Mammary epithelial cell (primary cell): ENCODE measurements at regions of chr16 and their contacts with region 1.

Region 1: GRCh38 chr16:48164907-48165726 is 9.3 kb upstream of the ABCC12 start:
- DNase-seq: peak; percentile 61
- H3K4me3 ChIP-seq: peak overlapping the region in 1 of 3 experiments; percentile 16
- H3K27ac ChIP-seq: no peak overlapping the region
- H3K4me1 ChIP-seq: no peaks in the 10 kb centered on the region
- H3K27me3 ChIP-seq: no peaks in the 10 kb centered on the region
- CTCF ChIP-seq: peak; percentile 68 to 83

Region 2: DNA sequence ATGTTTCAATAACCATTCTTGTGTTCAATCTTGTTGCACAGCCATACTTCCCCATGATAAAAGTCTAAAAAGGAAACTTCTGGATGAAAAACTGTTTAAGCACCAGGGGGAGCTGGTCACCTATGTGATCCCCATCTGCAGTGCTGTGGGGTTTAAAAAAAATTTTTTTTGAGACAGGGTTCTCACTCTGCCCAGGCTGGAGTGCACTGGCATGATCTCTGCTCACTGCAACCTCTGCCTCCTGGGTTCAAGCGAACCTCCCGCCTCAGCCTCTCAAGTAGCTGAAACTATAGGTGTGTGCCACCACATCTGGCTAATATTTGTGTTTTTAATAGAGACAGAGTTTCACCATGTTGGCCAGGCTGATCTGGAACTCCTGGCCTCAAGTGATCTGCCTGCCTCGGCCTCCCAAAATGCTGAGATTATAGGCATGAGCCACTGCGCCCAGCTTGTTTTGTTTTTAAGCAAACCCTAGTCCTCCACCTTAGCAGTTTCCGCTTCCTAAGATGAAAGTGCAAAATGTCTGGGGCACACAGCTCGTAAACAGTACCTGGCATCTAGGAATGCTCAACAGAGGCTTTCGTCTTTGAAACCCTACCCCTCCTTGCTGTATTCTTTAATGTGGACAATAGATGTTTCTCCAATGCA is 1217.1 kb before region 1 on chr16:
- CTCF ChIA-PET with region 1: no interaction called
- dilution Hi-C with region 1: loop called (anchors 5 kb)
- in situ Hi-C with region 1: loop called (anchors 10 kb)
- intact Hi-C with region 1: loop called (anchors 1 kb)
- DNase-seq: peak; percentile 26
- H3K4me3 ChIP-seq: no peak overlapping the region
- H3K27ac ChIP-seq: no peak overlapping the region
- H3K4me1 ChIP-seq: no peaks in the 10 kb centered on the region
- H3K27me3 ChIP-seq: no peaks in the 10 kb centered on the region
- CTCF ChIP-seq: peak; percentile 48 to 62

Region 3: DNA sequence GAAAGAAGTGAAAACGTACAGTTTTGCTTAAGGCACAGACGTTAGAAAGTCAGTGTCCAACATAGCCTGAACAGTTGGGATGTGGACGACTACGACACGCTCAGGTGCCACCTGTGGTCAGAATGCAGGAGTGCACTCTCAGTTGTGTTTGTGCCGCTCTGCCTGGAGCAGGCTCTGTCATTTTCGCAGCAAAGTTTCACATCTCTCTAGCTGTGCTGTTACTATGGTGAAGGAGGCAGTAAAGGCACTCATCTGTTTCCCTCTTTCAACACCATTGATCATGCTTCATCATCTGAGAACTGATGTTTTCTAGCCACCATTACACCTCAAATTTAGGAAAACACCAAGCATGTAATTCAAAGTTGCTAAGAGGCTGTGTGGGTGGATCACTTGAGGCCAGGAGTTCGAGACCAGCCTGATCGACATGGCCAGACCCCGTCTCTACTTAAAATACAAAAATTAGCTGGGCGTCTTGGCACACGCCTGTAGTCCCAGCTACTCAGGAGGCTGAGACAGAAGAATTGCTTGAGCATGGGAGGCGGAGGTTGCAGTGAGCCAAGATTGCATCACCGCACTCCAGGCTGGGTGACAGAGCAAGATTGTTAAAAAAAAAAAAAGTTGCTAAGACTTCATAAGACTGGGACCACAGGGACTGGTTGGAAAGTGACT is 1146.8 kb before region 1 on chr16:
- CTCF ChIA-PET with region 1: no interaction called
- dilution Hi-C with region 1: loop called (anchors 10 kb)
- in situ Hi-C with region 1: no loop called
- intact Hi-C with region 1: loop called (anchors 5 kb)
- DNase-seq: peak; percentile 56
- H3K4me3 ChIP-seq: no peak overlapping the region
- H3K27ac ChIP-seq: no peak overlapping the region
- H3K4me1 ChIP-seq: no peaks in the 10 kb centered on the region
- H3K27me3 ChIP-seq: no peaks in the 10 kb centered on the region
- CTCF ChIP-seq: peak; percentile 57 to 82

Region 4: GRCh38 chr16:47141773-47142485 is 1023.2 kb before region 1 on chr16:
- CTCF ChIA-PET with region 1: no interaction called
- dilution Hi-C with region 1: no loop called
- in situ Hi-C with region 1: loop called in 1 of 2 experiments (anchors 10 kb)
- intact Hi-C with region 1: loop called (anchors 2 kb)
- DNase-seq: peak; percentile 92
- H3K4me3 ChIP-seq: peak overlapping the region; percentile 68 to 78 (median 71)
- H3K27ac ChIP-seq: peak overlapping the region; percentile 70
- H3K4me1 ChIP-seq: peaks cover 30% of the 10 kb centered on the region
- H3K27me3 ChIP-seq: no peaks in the 10 kb centered on the region
- CTCF ChIP-seq: peak; percentile 98 to 99

Region 5: GRCh38 chr16:48123104-48123788 is 41.9 kb before region 1 on chr16:
- CTCF ChIA-PET with region 1: no interaction called
- dilution Hi-C with region 1: loop called (anchors 5 kb)
- in situ Hi-C with region 1: no loop called
- intact Hi-C with region 1: no loop called
- DNase-seq: peak; percentile 99
- H3K4me3 ChIP-seq: no peak overlapping the region
- H3K27ac ChIP-seq: peak overlapping the region; percentile 23
- H3K4me1 ChIP-seq: peaks cover 33% of the 10 kb centered on the region
- H3K27me3 ChIP-seq: no peaks in the 10 kb centered on the region
- CTCF ChIP-seq: no peak

Region 6: GRCh38 chr16:48526058-48526957 is 361.2 kb after region 1 on chr16:
- CTCF ChIA-PET with region 1: interaction called, 4 read pairs
- dilution Hi-C with region 1: no loop called
- in situ Hi-C with region 1: no loop called
- intact Hi-C with region 1: loop called (anchors 2 kb)
- DNase-seq: peak; percentile 75
- H3K4me3 ChIP-seq: no peak overlapping the region
- H3K27ac ChIP-seq: peak overlapping the region; percentile 9
- H3K4me1 ChIP-seq: peaks cover 5% of the 10 kb centered on the region
- H3K27me3 ChIP-seq: no peaks in the 10 kb centered on the region
- CTCF ChIP-seq: peak; percentile 54 to 81

Region 7: DNA sequence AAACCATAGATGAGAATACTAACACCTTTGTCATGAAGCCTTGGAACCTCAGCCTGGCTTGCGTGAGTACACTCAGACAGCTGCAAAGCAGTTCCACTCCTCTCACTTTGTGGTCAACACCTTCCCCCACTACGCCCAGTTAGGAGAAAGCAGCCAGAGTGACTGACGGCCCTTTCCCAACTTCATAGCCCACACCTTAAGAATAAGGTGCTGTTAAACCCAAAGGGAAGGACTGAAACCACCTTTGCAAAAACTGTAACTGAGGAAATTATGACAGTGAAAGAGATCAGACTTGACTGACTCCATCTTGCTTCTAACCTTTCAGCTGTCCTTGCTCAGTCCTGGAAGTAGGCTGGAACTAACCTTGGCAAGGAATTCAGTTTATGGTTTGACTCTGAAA is 431.2 kb after region 1 on chr16:
- CTCF ChIA-PET with region 1: no interaction called
- dilution Hi-C with region 1: no loop called
- in situ Hi-C with region 1: no loop called
- intact Hi-C with region 1: no loop called
- DNase-seq: peak; percentile 71
- H3K4me3 ChIP-seq: no peak overlapping the region
- H3K27ac ChIP-seq: no peak overlapping the region
- H3K4me1 ChIP-seq: no peaks in the 10 kb centered on the region
- H3K27me3 ChIP-seq: no peaks in the 10 kb centered on the region
- CTCF ChIP-seq: no peak